Activated CD4-positive, alpha-beta memory T cell treated with anti-CD3 and anti-CD28 coated beads for 36 hours (primary cell): ENCODE measurements at regions of chr4 and their contacts with region 1.

Region 1: GRCh38 chr4:76179398-76180318 is 31.5 kb upstream of the NUP54 start:
- DNase-seq: peak; percentile 87
- H3K4me3 Mint-ChIP-seq: no peak overlapping the region
- H3K27ac Mint-ChIP-seq: no peak overlapping the region
- H3K4me1 Mint-ChIP-seq: no peaks in the 10 kb centered on the region
- H3K27me3 Mint-ChIP-seq: no peaks in the 10 kb centered on the region

Region 2: DNA sequence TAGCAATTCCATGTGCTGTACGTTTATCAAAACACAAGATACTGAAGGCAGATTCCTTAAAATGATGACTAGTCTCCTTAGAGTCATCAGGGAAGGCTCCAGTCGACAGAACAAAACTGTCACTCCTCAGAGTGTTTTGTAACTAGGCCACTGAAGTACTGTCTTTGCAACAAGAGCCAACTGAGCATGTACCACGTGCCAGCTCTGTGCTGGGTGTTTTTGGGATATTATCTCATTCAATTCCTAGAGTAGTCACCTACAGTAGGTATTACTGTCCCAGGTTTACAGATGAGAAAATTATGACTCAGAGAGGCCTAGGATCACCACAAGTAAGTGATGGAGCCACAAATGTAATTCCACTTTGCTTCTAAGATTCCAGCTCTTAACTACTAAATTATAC is 13.2 kb before region 1 on chr4:
- CTCF ChIA-PET with region 1: interaction called, 19 read pairs
- POLR2A ChIA-PET with region 1: no interaction called
- intact Hi-C with region 1: no loop called
- DNase-seq: no peak
- H3K4me3 Mint-ChIP-seq: no peak overlapping the region
- H3K27ac Mint-ChIP-seq: no peak overlapping the region
- H3K4me1 Mint-ChIP-seq: no peaks in the 10 kb centered on the region
- H3K27me3 Mint-ChIP-seq: no peaks in the 10 kb centered on the region

Region 3: DNA sequence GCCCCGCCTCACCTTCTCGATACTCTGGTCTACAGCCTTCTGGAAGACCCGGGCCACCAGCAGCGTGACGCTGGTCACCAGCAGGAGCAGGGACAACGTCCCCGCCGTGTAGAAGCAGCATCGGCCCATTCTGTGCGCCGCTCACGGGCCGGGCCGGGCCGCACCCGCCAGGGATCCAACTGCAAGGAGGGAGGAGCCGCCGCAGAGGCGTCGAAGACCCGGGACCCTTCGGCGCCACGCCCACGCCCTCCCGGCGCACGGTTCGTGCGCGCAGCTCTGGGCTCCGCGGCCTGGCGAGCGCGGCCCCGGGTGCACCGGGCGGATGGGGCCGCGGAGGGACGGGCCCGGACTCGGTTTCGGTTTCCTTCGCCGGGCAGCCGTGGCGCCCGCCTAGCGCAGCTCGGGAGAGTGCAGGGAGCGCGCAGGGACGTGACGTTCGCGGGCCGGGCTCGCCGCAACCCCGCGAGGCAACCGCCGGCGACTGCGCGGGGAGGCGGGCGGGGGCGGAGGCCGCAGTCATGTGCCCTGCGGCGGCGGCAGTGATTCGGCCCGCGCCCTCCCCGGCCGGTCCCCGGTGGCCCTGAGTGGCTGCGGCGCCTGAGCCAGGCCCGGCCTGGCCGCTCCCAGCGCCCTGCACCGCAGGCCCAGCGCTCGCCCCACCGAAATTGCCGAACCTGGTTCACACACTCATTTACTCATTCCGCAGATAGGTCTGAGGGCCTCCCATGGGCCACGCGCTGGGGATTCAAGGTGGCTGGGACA is 33.9 kb after region 1 on chr4 and contains the start of gene SCARB2:
- CTCF ChIA-PET with region 1: interaction called, 14 read pairs
- POLR2A ChIA-PET with region 1: no interaction called
- intact Hi-C with region 1: no loop called
- DNase-seq: peak; percentile 75
- H3K4me3 Mint-ChIP-seq: peak within 1 kb of the TSS; percentile 70
- H3K27ac Mint-ChIP-seq: peak within 1 kb of the TSS; percentile 44
- H3K4me1 Mint-ChIP-seq: peaks cover 25% of the 10 kb centered on the region
- H3K27me3 Mint-ChIP-seq: no peaks in the 10 kb centered on the region
- total RNA-seq, gene SCARB2: 7.0 to 8.2 TPM

Region 4: DNA sequence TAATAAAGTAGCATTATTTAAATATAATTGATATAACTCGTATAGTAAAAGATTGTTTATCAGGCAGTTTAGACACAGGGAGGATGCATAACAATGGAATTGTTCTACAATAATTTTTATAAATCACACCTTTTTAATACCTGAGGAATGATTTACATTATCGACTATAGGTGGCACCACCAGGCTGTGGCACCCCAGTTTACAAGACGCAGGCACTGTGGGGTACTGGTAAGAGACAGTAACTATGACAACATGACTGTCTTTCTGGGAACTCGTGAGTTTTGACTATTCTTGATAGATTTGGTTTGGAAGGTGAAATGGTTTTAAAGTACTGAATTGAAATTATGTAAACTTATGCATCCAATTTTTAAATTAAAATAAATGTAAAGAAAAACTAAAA is 99.8 kb after region 1 on chr4:
- CTCF ChIA-PET with region 1: interaction called, 15 read pairs
- POLR2A ChIA-PET with region 1: no interaction called
- intact Hi-C with region 1: no loop called
- DNase-seq: peak; percentile 24
- H3K4me3 Mint-ChIP-seq: no peak overlapping the region
- H3K27ac Mint-ChIP-seq: no peak overlapping the region
- H3K4me1 Mint-ChIP-seq: no peaks in the 10 kb centered on the region
- H3K27me3 Mint-ChIP-seq: peaks cover 4% of the 10 kb centered on the region

Region 5: DNA sequence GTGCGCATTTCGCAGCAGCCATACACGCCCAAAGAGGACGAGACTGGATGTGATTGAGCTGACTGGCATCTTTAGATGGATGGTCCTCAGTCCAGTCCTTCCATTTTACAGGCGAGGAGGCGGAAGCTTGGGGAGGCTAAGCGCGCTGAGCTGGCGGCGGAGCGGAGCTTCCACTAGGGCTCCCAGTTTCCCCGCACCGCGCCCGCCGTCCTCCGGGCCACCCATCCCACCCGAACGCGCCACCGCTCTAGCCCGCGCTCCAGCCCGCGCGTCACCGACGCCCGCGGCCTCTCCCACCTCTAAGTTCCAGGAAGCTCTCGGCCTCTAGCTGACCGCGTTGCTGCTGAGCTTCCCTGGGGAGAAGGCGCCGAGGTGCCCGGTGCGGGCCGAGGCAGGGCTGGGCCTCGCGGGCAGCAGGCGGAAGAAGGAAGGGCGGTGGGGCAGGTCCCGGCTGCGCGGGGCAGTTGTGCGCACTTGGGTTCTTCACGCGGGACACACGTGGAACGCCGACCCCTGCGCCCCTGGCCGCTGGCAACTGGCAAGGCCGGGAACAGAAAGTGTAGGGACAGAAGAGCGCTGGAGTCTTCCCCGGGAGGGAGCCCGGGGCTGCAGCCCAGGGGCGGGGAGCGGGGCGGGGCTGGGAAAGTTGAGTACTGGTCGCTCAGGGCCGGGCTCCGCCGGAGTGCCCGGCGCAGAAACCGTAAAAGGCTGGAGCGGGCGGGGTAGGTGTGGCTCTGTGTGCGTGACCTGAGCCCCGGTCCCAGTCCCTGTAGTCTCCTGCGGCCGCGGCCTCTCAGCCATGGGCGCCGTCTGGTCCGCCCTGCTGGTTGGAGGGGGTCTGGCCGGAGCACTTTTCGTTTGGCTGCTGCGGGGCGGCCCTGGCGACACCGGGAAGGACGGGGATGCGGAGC is 126.6 kb after region 1 on chr4 and contains the start of gene STBD1:
- CTCF ChIA-PET with region 1: interaction called, 13 read pairs
- POLR2A ChIA-PET with region 1: no interaction called
- intact Hi-C with region 1: loop called (anchors 2 kb)
- DNase-seq: peak; percentile 46
- H3K4me3 Mint-ChIP-seq: peak within 1 kb of the TSS; percentile 75
- H3K27ac Mint-ChIP-seq: peak within 1 kb of the TSS; percentile 24
- H3K4me1 Mint-ChIP-seq: peaks cover 30% of the 10 kb centered on the region
- H3K27me3 Mint-ChIP-seq: peaks cover 3% of the 10 kb centered on the region
- total RNA-seq, gene STBD1: 0.63 to 0.67 TPM

Region 6: DNA sequence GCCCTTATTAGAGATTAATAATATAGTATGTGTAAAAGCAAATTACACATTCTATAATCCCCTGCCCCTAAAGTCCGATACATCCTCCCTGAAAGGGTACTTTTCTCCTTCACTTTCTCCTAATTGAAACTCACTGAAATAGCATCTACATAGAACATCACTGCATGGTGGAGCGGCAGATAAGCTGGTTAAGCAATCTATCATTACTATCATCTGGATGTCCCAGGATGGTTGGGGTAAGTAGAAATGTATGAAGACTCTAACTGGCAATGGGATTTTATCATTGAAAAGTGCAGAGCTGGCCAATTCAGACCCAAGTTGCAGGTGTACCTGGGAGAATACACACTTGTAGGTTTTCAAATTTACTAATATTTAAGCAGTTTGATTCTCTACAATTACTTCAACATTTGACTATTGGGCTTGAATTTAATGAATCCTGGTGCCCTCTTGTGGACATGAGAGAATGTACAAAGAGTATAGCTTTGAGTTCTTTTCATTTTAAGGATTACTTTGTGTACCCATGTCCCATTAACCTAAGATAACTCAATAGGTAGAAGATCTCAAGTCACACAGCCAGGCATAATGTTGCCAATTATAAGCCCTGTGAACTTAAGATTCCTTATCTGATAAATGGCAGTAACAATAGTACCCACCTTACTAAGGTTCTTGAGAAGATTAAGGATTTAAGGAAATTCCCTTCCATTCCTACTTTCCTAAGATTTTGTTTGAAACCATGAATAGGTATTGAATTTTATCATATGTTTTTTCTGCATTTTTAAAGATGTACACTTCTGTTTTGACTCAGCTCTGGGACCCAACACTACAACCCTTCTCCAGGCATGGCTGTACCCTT is 325.2 kb after region 1 on chr4:
- CTCF ChIA-PET with region 1: interaction called, 44 read pairs
- POLR2A ChIA-PET with region 1: no interaction called
- intact Hi-C with region 1: loop called (anchors 2 kb)
- DNase-seq: no peak
- H3K4me3 Mint-ChIP-seq: no peak overlapping the region
- H3K27ac Mint-ChIP-seq: no peak overlapping the region
- H3K4me1 Mint-ChIP-seq: no peaks in the 10 kb centered on the region
- H3K27me3 Mint-ChIP-seq: peaks cover 4% of the 10 kb centered on the region